ENCODE measurements at regions of chr4 and their contacts with region 1.

Region 1: GRCh38 chr4:99808260-99808857 is 8.3 kb upstream of the DAPP1 start:
- DNase-seq: peak; percentile 61 to 77 (median 68)
- ATAC-seq: peak; percentile 94
- H3K4me3 ChIP-seq: no peak overlapping the region
- H3K27ac ChIP-seq: no peak overlapping the region
- H3K4me1 ChIP-seq: no peaks in the 10 kb centered on the region; a peak in 1 of 5 replicates
- H3K27me3 ChIP-seq: peaks cover 4 to 24% of the 10 kb centered on the region in 2 experiments; a peak in 3 of 5 replicates
- CTCF ChIP-seq: peak; percentile 85 to 89 (median 87)
- EP300 ChIP-seq: no peak
- POLR2A ChIP-seq: no peak
- RAD21 ChIP-seq: peak; percentile 90 to 93

Region 2: GRCh38 chr4:99405433-99406115 is 402.8 kb before region 1 on chr4:
- CTCF ChIA-PET with region 1: no interaction called
- POLR2A ChIA-PET with region 1: no interaction called
- in situ Hi-C with region 1: no loop called
- intact Hi-C with region 1: loop called (anchors 5 kb)
- DNase-seq: peak; percentile 29 to 71 (median 54)
- ATAC-seq: peak; percentile 92
- H3K4me3 ChIP-seq: no peak overlapping the region
- H3K27ac ChIP-seq: no peak overlapping the region
- H3K4me1 ChIP-seq: no peaks in the 10 kb centered on the region
- H3K27me3 ChIP-seq: no peaks in the 10 kb centered on the region
- CTCF ChIP-seq: peak; percentile 73 to 88 (median 82)
- EP300 ChIP-seq: no peak
- POLR2A ChIP-seq: no peak
- RAD21 ChIP-seq: peak; percentile 90 to 93

Region 3: GRCh38 chr4:99462875-99463464 is 345.4 kb before region 1 on chr4:
- CTCF ChIA-PET with region 1: no interaction called
- POLR2A ChIA-PET with region 1: no interaction called
- in situ Hi-C with region 1: no loop called
- intact Hi-C with region 1: loop called (anchors 5 kb)
- DNase-seq: peak; percentile 66 to 72 (median 68)
- ATAC-seq: peak; percentile 97
- H3K4me3 ChIP-seq: no peak overlapping the region
- H3K27ac ChIP-seq: no peak overlapping the region
- H3K4me1 ChIP-seq: no peaks in the 10 kb centered on the region
- H3K27me3 ChIP-seq: no peaks in the 10 kb centered on the region
- CTCF ChIP-seq: peak; percentile 74 to 84 (median 79)
- EP300 ChIP-seq: no peak
- POLR2A ChIP-seq: no peak
- RAD21 ChIP-seq: peak; percentile 83 to 84

Region 4: DNA sequence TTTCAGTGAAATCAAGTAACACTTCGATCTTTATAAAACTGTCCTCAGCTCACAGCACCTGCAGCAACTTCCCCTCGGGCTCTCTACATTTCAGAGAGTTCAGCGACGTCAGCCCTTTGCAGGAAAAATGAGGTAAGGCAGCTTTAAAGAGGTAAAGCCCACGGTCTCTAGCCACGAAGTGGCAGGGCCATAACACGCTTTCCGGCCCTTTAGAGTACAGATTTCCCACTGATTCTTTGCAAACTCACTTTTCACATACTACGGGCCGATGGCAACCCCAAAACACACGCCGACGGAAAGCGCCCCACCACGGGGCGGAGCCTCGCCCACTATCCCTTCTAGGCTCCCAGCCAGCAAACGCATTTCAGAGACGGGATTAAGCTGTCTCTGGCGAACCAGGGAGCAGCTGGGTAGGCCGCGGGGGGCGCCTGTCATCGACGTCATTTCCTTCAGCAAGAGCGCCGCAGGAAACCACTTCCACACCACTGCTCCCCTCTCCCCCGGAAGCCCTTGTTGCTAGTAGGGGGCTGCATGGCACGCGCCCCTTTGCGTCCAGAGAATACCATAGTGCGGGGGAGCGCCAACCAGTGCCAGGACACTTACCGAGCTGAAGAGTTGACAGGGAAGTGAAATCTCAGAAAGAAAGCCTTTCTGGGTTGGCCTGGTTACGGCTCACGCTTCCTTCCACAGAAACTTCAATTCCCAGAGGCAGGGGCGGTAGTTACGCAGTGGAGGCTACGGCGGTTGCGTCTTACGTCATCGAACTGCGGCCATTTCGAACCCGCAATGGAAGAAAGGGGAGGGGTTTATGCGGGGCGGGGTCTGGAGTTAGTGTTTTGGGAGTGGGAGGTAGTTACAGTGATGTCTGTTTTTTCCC is 244.8 kb before region 1 on chr4 and contains the start of gene TRMT10A:
- CTCF ChIA-PET with region 1: interaction called, 24 read pairs
- POLR2A ChIA-PET with region 1: no interaction called
- in situ Hi-C with region 1: no loop called
- intact Hi-C with region 1: loop called (anchors 1 kb)
- DNase-seq: peak; percentile 83 to 98 (median 86)
- ATAC-seq: peak; percentile 94
- H3K4me3 ChIP-seq: peak within 1 kb of the TSS; percentile 65
- H3K27ac ChIP-seq: peak within 1 kb of the TSS; percentile 96
- H3K4me1 ChIP-seq: peaks cover 0 to 4% of the 10 kb centered on the region in 2 experiments; a peak in 1 of 5 replicates
- H3K27me3 ChIP-seq: no peaks in the 10 kb centered on the region
- CTCF ChIP-seq: no peak
- EP300 ChIP-seq: 0 out of 2 replicates have a peak, but pooled peaks have one; percentile 9
- POLR2A ChIP-seq: peak; percentile 92
- RAD21 ChIP-seq: no peak
- polyA plus RNA-seq, gene TRMT10A: 13.1 to 16.1 TPM

Region 5: DNA sequence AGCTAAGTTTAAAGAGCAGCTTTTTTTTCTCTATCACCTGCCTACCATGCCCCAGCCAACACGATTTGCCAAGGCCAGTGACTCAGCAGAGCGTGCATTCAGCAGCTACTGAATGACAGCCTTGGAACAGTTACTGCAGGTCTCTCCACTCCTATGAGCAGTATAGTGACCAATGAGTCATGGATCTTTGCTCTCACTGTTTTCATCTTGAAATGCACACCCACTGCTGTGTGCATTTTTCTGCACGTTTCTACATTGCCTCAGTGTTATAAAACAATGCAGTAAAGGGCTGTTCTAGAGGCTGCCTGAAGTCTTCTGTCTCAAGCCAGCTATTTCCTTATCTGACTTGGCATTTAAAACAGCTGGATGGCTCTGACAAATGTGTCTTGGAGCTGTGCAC is 84.7 kb before region 1 on chr4:
- CTCF ChIA-PET with region 1: no interaction called
- POLR2A ChIA-PET with region 1: no interaction called
- in situ Hi-C with region 1: no loop called
- intact Hi-C with region 1: loop called (anchors 1 kb)
- DNase-seq: peak; percentile 17 to 88 (median 50)
- ATAC-seq: peak; percentile 98
- H3K4me3 ChIP-seq: no peak overlapping the region; the same call in 1 of the 2 replicates
- H3K27ac ChIP-seq: peak overlapping the region; percentile 55; the same call in 2 of the 3 replicates
- H3K4me1 ChIP-seq: peaks cover 4 to 18% of the 10 kb centered on the region in 2 experiments; a peak in 4 of 5 replicates
- H3K27me3 ChIP-seq: no peaks in the 10 kb centered on the region
- CTCF ChIP-seq: no peak
- EP300 ChIP-seq: no peak; the same call in 1 of the 2 replicates
- POLR2A ChIP-seq: no peak
- RAD21 ChIP-seq: no peak

Region 6: DNA sequence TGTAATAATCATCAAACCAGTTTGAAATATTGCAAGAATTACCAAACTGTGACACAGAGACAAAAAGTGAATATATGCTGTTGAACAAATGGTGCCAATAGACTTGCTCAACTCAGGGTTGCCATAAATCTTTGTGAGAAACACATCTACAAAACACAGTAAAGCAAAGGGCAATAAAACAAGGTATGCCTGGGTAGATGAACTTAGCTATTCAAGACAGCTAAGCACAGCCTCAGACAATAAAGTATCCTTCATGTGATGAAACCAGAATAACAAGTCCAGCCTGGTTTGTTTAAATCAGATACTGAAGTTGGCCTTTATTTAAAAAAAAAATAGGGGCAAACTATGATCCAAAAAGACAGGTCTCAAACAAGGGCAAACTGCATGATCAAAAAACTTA is 66.7 kb after region 1 on chr4:
- CTCF ChIA-PET with region 1: no interaction called
- POLR2A ChIA-PET with region 1: interaction called, 5 read pairs
- in situ Hi-C with region 1: loop called (anchors 5 kb)
- intact Hi-C with region 1: no loop called
- DNase-seq: no peak
- ATAC-seq: no peak
- H3K4me3 ChIP-seq: no peak overlapping the region
- H3K27ac ChIP-seq: no peak overlapping the region
- H3K4me1 ChIP-seq: no peaks in the 10 kb centered on the region
- H3K27me3 ChIP-seq: no peaks in the 10 kb centered on the region
- CTCF ChIP-seq: no peak
- EP300 ChIP-seq: no peak
- POLR2A ChIP-seq: no peak
- RAD21 ChIP-seq: no peak

Region 7: DNA sequence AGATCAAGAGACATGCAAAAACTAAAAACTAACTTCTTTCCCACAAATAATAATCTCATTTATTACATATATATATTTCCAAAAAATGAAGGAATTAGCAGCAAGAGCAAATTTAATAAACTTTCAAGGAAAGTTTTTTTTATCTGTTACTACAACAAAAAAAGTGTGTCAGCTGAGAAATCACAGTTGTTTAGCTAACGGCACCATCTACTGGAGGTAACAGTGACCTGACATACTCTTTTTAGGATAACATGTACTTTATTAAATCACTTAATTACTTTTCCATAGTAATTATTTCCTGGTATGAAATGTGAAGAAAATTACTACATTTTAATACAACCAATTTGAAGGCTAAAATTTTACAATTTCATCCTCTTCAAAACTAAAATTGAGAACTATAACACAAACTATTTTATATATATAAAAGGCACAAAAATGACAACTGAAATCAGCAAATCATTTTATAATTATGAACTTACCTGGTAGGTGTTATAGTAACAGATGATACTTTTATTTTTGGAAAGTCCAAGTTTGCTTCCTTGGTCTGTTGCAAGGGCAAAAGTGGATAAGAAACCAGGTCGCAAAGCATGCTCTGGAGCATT is 76.8 kb after region 1 on chr4:
- CTCF ChIA-PET with region 1: interaction called, 21 read pairs
- POLR2A ChIA-PET with region 1: interaction called, 5 read pairs
- in situ Hi-C with region 1: no loop called
- intact Hi-C with region 1: loop called (anchors 1 kb)
- DNase-seq: peak; percentile 23 to 62 (median 31)
- ATAC-seq: peak; percentile 72
- H3K4me3 ChIP-seq: no peak overlapping the region
- H3K27ac ChIP-seq: no peak overlapping the region
- H3K4me1 ChIP-seq: no peaks in the 10 kb centered on the region
- H3K27me3 ChIP-seq: no peaks in the 10 kb centered on the region
- CTCF ChIP-seq: peak; percentile 47 to 81 (median 50); a peak in 4 of 6 replicates
- EP300 ChIP-seq: no peak
- POLR2A ChIP-seq: no peak
- RAD21 ChIP-seq: peak; percentile 81 to 83

Region 8: DNA sequence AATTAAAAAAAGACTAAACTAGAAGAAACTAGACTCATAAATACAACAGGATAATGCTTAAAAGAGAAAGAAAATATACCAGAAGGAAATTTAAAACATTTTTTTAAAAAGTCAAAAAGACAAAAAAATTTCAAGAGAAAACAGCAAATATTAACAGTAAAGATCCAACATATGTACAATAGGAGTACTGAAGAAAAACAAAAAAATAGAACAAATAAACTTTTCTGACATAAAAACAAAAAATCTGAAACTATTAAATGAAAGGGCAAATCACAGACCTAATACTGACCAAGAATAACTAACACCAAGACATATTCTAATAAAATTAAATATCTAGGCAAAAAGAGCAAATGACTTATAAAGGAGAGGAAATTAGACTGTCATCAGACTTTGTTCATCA is 126.5 kb after region 1 on chr4:
- CTCF ChIA-PET with region 1: no interaction called
- POLR2A ChIA-PET with region 1: no interaction called
- in situ Hi-C with region 1: no loop called
- intact Hi-C with region 1: no loop called
- DNase-seq: no peak
- ATAC-seq: no peak
- H3K4me3 ChIP-seq: no peak overlapping the region
- H3K27ac ChIP-seq: no peak overlapping the region
- H3K4me1 ChIP-seq: no peaks in the 10 kb centered on the region
- H3K27me3 ChIP-seq: no peaks in the 10 kb centered on the region
- CTCF ChIP-seq: no peak
- EP300 ChIP-seq: no peak
- POLR2A ChIP-seq: no peak
- RAD21 ChIP-seq: no peak